Aorta (tissue), 5 donors: ENCODE measurements at regions of chr19 and their contacts with region 1.

Region 1: GRCh38 chr19:16324384-16325160 is at the start of gene KLF2:
- DNase-seq: peak; percentile 97 to 99
- ATAC-seq: peak; percentile 87
- H3K4me3 ChIP-seq: peak within 1 kb of the TSS; percentile 61 to 69
- H3K27ac ChIP-seq: peak within 1 kb of the TSS; percentile 96 to 99
- H3K4me1 ChIP-seq: no peaks in the 10 kb centered on the region
- H3K27me3 ChIP-seq: no peaks in the 10 kb centered on the region
- total RNA-seq, gene KLF2: 98.9 to 223 TPM

Region 2: GRCh38 chr19:16066611-16067104 is 257.9 kb before region 1 on chr19:
- intact Hi-C with region 1: loop called in 1 of 2 experiments (anchors 5 kb)
- DNase-seq: peak in 1 of 2 donors; percentile 49
- ATAC-seq: no peak
- H3K4me3 ChIP-seq: no peak overlapping the region
- H3K27ac ChIP-seq: peak overlapping the region; percentile 68 to 90
- H3K4me1 ChIP-seq: no peaks in the 10 kb centered on the region
- H3K27me3 ChIP-seq: no peaks in the 10 kb centered on the region

Region 3: DNA sequence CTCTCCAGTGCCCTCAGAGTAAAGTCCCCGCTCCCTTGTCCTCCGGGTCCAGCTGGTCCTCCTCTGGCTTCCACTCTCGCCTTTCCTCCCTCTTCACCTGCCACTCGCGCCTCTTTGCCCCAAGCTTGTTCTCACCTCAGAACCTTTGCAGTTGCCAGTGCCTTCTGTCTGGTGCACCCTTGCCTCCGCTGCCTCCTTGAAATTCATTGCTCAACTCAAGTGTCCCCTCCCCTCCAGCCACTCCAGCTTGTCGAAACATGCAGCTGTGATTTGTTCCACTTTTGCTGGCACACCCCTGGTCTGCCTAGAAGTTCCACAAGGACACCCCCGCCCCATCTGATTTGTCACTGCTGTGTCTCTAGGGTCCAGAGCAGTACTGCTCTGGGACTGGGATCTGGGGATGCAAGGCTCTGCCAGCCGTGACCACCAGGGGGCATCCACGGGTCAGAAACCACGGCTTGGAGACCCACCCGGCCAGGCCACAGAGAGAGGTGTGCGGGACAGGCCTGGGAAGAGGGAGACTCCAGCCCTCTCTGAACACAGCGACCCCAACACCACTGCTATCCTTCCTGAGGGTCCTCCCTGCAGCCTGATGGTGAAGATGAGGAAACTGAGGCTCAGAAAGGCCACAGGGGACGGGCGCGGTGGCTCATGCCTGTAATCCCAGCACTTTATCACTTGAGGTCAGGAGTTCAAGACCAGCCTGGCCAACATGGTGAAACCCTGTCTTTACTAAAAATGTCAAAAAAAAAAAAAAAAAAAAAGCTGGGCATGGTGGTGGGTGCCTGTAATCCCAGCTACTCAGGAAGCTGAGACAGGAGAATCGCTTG is 77.0 kb before region 1 on chr19:
- intact Hi-C with region 1: loop called in 1 of 2 experiments (anchors 5 kb)
- DNase-seq: peak; percentile 89 to 97
- ATAC-seq: peak; percentile 94
- H3K4me3 ChIP-seq: no peak overlapping the region
- H3K27ac ChIP-seq: no peak overlapping the region
- H3K4me1 ChIP-seq: no peaks in the 10 kb centered on the region
- H3K27me3 ChIP-seq: no peaks in the 10 kb centered on the region

Region 4: GRCh38 chr19:16283210-16284061 is 41.1 kb before region 1 on chr19:
- intact Hi-C with region 1: loop called in 1 of 2 experiments (anchors 5 kb)
- DNase-seq: peak; percentile 89 to 93
- ATAC-seq: peak; percentile 88
- H3K4me3 ChIP-seq: no peak overlapping the region
- H3K27ac ChIP-seq: peak overlapping the region; percentile 81 to 90
- H3K4me1 ChIP-seq: no peaks in the 10 kb centered on the region
- H3K27me3 ChIP-seq: no peaks in the 10 kb centered on the region

Region 5: GRCh38 chr19:16293118-16294091 is 31.2 kb before region 1 on chr19:
- intact Hi-C with region 1: loop called (anchors 5 kb)
- DNase-seq: peak; percentile 80 to 91
- ATAC-seq: peak; percentile 89
- H3K4me3 ChIP-seq: no peak overlapping the region
- H3K27ac ChIP-seq: peak overlapping the region; percentile 65 to 83
- H3K4me1 ChIP-seq: peaks cover 0 to 3% of the 10 kb centered on the region in 2 donors
- H3K27me3 ChIP-seq: no peaks in the 10 kb centered on the region